CD8-positive, alpha-beta T cell (primary cell): ENCODE measurements at regions of chr20 and their contacts with region 1.

Region 1: DNA sequence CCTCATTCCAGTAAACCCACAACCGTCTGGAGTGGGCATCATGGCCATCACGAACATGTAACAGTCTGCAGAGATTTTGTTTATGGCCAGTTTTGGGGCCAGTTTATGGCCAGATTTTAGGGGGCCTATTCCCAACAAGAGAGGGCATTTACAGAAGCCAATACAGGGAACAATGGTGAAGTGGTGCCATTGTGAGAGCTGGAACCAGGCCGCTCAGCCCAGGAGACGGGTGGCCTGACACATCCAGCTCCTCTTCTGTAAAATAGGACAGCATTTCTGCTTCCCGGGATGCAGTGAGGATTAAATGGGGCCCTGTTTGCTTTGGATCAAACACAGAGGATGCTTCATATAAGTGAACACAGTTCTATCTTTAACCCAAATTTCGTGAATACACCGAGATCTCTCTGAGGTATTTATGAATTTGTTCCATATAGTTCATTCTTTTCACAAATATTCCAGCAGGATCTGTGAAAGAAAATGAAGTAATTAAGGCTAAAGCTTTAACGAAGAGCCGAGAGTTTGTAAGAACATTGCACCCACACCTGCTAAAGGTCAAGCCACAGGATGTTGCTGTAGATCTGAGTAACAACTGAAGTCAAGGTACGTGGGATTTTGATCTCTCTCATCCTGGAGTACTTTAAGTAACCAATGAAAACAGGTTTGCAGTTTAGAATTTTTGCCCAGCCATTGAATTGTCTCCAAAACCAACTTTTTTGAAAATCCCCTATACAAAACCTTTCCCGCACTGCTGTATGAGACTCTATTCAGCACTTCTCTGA is 14.5 kb upstream of the SIRPG start:
- DNase-seq: peak in 1 of 9 experiments; percentile 55
- ATAC-seq: peak; percentile 55
- H3K4me3 ChIP-seq: no peak overlapping the region
- H3K4me3 Mint-ChIP-seq: peak overlapping the region; percentile 44
- H3K27ac ChIP-seq: peak overlapping the region in 1 of 2 experiments; percentile 64
- H3K27ac Mint-ChIP-seq: peak overlapping the region; percentile 94
- H3K4me1 ChIP-seq: peaks cover 88% of the 10 kb centered on the region
- H3K4me1 Mint-ChIP-seq: peaks cover 98% of the 10 kb centered on the region
- H3K27me3 ChIP-seq: no peaks in the 10 kb centered on the region
- H3K27me3 Mint-ChIP-seq: no peaks in the 10 kb centered on the region
- CTCF ChIP-seq: no peak

Region 2: DNA sequence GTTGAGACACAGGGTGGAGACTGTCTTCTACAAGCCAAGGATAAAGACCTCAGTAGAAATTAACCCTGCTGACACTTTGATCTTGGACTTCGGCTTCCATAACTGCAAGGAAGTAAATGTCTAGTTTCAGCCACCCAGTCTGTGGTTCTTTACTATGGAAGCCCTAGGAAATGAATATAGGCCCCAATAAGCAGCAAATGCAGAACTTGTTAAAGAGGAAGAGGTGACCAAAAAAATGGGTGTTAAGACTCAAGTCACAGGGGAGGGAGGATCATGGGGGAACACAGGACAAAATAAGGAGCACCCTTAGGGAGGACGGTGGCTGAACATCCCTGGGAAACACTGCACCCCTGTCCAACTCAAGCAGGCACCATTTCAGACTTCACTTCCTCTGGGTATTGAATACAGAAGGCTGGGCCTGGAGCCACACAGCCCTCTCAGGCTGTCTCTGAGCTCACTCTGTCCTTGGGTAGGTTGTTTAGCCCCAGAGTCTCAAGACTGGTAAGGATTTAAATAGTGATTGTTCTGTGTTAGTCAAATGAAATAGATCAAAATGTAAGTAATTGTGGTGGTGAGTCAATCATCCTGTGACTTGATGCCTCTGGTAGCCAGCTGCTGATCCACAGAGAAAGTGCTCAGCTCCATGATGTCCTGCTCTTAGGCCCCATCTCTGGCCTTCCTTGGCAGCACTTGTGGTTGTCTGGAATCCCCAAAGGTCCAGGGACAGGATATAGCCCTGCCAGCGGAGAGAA is 84.1 kb before region 1 on chr20:
- CTCF ChIA-PET with region 1: no interaction called
- POLR2A ChIA-PET with region 1: no interaction called
- intact Hi-C with region 1: no loop called
- DNase-seq: no peak
- ATAC-seq: no peak
- H3K4me3 ChIP-seq: no peak overlapping the region
- H3K4me3 Mint-ChIP-seq: no peak overlapping the region
- H3K27ac ChIP-seq: peak overlapping the region in 1 of 2 experiments; percentile 61
- H3K27ac Mint-ChIP-seq: no peak overlapping the region
- H3K4me1 ChIP-seq: peaks cover 6% of the 10 kb centered on the region
- H3K4me1 Mint-ChIP-seq: no peaks in the 10 kb centered on the region
- H3K27me3 ChIP-seq: no peaks in the 10 kb centered on the region
- H3K27me3 Mint-ChIP-seq: no peaks in the 10 kb centered on the region
- CTCF ChIP-seq: no peak

Region 3: DNA sequence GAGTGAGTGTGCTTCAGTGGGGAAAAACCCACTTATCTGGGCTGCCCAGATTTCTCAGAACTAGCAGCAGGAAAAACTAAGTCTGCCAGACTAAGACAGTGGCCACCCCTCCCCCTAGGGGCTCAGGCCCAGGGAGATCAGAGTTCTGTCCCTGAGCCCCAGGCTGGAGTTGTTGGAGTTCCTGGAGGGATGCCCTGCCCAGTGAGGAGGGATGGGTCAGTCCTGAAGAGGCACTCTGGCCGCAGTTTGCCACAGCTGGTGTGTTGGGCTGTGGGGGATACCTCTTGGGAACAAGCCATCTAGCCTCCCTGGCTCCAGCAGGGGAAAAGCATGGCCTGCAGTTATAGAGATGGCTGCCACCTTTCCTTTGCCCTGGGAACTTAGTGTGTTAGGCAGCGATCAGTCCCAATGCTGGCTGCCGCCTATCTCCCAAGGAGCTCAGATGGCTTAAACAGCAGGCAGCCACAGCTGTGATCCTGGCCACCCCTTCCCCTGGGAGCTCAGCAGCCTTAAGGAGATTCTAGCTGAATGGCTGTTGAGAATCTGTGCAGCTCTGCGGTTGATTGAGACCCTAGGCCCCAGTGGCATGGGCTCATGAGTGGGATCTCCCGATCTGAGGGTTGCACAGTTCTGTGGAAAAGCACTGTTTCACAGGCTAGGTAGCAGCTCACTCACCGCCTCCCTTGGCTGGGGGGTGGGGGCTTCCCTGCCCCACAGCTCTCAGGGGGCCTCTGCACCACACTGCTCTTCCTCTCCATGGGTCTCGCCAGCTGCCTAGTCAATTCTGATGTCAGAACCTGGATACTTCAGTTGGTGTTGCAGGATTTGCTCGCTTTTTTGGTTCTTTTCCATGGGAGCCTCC is 27.7 kb before region 1 on chr20:
- CTCF ChIA-PET with region 1: no interaction called
- POLR2A ChIA-PET with region 1: no interaction called
- intact Hi-C with region 1: loop called in 1 of 2 experiments (anchors 5 kb)
- DNase-seq: no peak
- ATAC-seq: no peak
- H3K4me3 ChIP-seq: no peak overlapping the region
- H3K4me3 Mint-ChIP-seq: no peak overlapping the region
- H3K27ac ChIP-seq: no peak overlapping the region
- H3K27ac Mint-ChIP-seq: peak overlapping the region; percentile 66
- H3K4me1 ChIP-seq: peaks cover 54% of the 10 kb centered on the region
- H3K4me1 Mint-ChIP-seq: peaks cover 52% of the 10 kb centered on the region
- H3K27me3 ChIP-seq: no peaks in the 10 kb centered on the region
- H3K27me3 Mint-ChIP-seq: no peaks in the 10 kb centered on the region
- CTCF ChIP-seq: no peak

Region 4: GRCh38 chr20:1657556-1658334 is 14.3 kb before region 1 on chr20 and contains the start of gene SIRPG:
- CTCF ChIA-PET with region 1: no interaction called
- POLR2A ChIA-PET with region 1: interaction called, 8 read pairs
- intact Hi-C with region 1: loop called (anchors 2 kb)
- DNase-seq: peak in 3 of 9 experiments; percentile 31 to 60 (median 40)
- ATAC-seq: peak; percentile 51
- H3K4me3 ChIP-seq: peak within 1 kb of the TSS; percentile 52 to 59
- H3K4me3 Mint-ChIP-seq: peak within 1 kb of the TSS; percentile 89
- H3K27ac ChIP-seq: peak within 1 kb of the TSS; percentile 39 to 68
- H3K27ac Mint-ChIP-seq: peak within 1 kb of the TSS; percentile 96
- H3K4me1 ChIP-seq: peaks cover 87% of the 10 kb centered on the region
- H3K4me1 Mint-ChIP-seq: peaks cover 88% of the 10 kb centered on the region
- H3K27me3 ChIP-seq: no peaks in the 10 kb centered on the region
- H3K27me3 Mint-ChIP-seq: no peaks in the 10 kb centered on the region
- CTCF ChIP-seq: no peak
- total RNA-seq, gene SIRPG: 17.1 to 17.6 TPM

Region 5: DNA sequence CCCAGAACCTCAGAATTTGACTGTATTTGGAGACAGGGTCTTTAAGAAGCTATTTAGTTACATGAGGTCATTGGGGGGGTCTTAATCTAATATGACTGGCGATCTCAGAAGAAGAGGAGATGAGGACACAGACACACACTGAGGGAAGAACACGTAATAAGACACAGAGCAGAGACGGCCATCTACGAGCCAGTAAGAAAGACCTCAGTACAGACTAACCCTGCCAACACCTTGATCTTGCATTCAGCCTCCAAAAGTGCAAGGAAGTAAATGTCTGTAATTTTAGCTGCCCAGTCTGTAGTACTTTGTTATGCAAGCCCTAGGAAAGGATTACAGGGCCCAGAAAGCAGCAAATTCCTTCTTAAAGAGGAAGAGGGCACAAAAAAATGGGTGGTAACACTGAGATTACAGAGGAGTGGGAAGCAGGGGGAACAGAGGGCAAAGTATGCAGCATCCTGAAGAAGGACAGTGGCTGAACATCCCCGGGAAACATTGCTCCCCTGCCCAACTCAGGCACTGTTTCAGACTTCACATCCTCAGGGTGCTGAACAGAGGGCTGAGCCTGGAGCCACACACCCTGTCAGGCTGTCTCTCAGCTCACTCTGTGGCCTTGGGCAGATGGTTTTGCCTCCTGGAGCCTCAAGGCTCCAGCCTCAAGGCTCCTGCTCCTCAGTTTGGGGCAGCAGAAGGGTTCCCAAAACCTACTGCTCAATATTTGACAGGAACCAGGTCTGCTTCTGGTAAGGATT is 13.4 kb after region 1 on chr20:
- CTCF ChIA-PET with region 1: interaction called, 3 read pairs
- POLR2A ChIA-PET with region 1: interaction called, 5 read pairs
- intact Hi-C with region 1: loop called in 1 of 2 experiments (anchors 1 kb)
- DNase-seq: no peak
- ATAC-seq: peak; percentile 50
- H3K4me3 ChIP-seq: peak overlapping the region; percentile 49 to 61
- H3K4me3 Mint-ChIP-seq: peak overlapping the region; percentile 87
- H3K27ac ChIP-seq: peak overlapping the region; percentile 39 to 62
- H3K27ac Mint-ChIP-seq: peak overlapping the region; percentile 92
- H3K4me1 ChIP-seq: peaks cover 26% of the 10 kb centered on the region
- H3K4me1 Mint-ChIP-seq: peaks cover 68% of the 10 kb centered on the region
- H3K27me3 ChIP-seq: no peaks in the 10 kb centered on the region
- H3K27me3 Mint-ChIP-seq: no peaks in the 10 kb centered on the region
- CTCF ChIP-seq: no peak